Ascending aorta (tissue), 2 donors: ENCODE measurements at regions of chr10 and their contacts with region 1.

Region 1: DNA sequence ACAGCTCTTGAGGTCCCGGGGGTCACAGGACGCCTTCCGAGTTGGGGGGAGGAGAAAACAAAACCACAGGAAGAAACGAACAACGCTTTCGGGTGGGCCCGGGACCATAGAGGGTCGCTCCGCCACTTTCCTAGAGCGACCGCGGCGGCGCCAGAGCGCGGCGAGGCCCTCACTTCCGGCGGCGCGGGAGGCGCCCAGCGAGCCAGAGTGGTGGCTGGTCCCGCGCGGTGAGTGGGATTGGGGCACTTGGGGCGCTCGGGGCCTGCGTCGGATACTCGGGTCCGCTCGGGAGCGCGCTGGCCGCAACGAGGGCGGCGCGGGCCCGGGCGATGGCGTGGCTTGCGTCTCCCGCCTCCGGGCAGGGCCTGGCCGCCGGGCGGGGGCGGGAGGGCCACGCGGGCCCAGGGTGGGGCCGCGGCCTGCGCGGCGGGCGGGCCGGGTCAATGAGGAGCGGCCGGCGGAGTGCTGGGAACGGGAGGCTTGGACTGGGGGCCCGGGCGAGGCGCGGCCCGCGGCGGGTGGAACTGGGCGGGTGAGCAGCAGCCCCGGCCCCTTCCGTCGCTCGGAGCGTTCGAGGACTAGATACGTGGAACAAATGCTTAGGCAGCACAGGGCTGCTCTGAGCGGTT is at the start of gene ZNF22:
- DNase-seq: no peak
- H3K4me3 ChIP-seq: peak within 1 kb of the TSS; percentile 74
- H3K27ac ChIP-seq: peak within 1 kb of the TSS; percentile 90 to 93
- H3K4me1 ChIP-seq: peaks cover 3 to 44% of the 10 kb centered on the region in 2 donors
- H3K27me3 ChIP-seq: no peaks in the 10 kb centered on the region
- CTCF ChIP-seq: peak in 1 of 3 experiments; percentile 30
- total RNA-seq, gene ZNF22: 1.6 TPM

Region 2: DNA sequence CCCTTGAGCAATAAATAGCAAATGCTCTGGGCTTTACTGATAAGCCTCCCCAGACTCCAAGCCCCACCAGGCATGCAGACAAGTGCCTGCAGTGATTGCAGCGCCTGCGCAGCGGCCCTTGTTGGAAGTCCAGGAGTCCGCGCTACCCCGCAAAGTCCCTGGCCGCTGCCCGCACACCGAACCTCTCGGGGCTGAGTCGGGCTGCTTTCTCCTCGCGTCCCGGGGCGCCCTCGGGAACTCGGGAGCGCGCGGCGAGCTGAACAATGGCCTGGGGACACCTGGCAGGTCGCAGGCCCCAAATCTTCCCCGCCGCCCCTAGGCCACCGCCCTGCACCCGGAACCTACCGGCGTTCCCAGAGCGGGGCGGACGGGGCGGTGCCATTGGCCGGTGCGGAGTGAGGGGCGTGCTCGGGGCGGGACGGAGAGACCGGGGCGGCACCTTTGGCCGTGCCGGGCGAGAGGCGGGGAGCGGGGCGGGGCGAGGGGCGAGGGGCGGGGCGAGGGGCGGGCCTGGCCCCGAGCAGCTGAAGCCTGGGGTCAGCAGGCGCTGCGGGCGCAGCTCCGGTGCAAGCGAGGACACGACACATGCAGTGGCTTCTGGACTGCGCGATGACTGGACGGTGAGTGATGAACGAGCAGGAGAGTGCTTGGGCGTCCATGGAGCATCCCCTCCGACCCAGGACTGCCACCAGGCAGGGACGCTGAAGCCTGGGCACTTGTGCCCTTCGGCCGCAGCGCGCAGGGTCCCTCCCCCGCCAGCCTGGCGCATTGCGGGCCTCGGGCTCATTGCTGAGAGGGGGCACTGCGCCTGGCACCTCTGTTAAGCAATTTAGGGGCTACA is 41.4 kb before region 1 on chr10 and contains the start of gene RASSF4:
- intact Hi-C with region 1: loop called (anchors 1 kb)
- DNase-seq: peak in 1 of 2 donors; percentile 95
- H3K4me3 ChIP-seq: peak within 1 kb of the TSS; percentile 78 to 93
- H3K27ac ChIP-seq: peak within 1 kb of the TSS; percentile 86 to 90
- H3K4me1 ChIP-seq: peaks cover 13 to 40% of the 10 kb centered on the region in 2 donors
- H3K27me3 ChIP-seq: no peaks in the 10 kb centered on the region
- CTCF ChIP-seq: peak in 1 of 3 experiments; percentile 15
- total RNA-seq, gene RASSF4: 40.0 TPM

Region 3: DNA sequence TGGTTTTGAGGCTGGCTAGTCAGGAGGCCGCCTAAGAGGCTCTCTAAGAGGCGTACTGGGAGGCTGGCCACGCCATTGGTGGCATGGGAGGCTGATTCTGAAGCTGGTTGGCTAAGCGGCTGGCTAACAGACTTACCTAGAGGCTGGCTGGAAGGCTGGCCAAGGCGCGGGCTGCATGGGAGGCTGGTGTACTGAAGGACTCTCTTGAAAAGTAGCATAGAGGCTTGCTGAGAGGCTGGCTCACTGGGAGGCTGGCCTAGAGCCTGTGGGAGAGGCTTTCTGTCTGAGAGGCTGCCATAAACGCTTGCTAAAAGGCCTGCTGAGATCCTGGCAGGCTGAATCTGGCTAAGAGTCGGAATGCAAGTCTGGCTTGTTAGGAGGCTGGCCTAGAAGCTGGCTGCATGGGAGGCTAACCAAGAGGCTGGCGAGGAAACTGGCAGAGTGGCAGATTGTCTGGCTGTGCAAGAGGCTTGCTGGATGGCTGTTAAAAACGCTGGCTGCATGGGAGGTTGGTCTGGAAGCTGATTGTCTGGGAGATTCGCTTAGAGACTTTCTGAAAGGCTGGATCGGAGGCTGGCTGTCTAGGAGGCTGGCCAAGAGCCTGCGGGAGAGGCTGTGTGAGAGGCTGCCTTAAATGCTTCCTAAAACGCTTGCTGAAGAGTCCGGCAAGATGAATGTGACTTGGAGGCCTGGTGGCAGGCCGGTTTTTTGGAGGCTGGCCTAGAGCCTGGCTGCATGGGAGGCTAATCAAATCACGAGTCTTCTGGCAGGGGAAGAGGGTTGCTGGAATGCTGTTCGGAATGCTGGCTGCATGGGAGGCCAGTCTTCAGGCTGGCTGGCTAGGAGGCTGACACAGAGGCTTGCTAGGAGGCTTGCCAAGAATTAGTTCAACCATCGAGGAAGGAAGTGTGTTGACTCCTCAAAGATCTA is 180.3 kb after region 1 on chr10:
- intact Hi-C with region 1: loop called (anchors 2 kb)
- DNase-seq: peak in 1 of 2 donors; percentile 72
- H3K4me3 ChIP-seq: peak overlapping the region in 1 of 2 donors; percentile 9
- H3K27ac ChIP-seq: peak overlapping the region; percentile 70
- H3K4me1 ChIP-seq: peaks cover 0 to 13% of the 10 kb centered on the region in 2 donors
- H3K27me3 ChIP-seq: no peaks in the 10 kb centered on the region
- CTCF ChIP-seq: no peak

Region 4: DNA sequence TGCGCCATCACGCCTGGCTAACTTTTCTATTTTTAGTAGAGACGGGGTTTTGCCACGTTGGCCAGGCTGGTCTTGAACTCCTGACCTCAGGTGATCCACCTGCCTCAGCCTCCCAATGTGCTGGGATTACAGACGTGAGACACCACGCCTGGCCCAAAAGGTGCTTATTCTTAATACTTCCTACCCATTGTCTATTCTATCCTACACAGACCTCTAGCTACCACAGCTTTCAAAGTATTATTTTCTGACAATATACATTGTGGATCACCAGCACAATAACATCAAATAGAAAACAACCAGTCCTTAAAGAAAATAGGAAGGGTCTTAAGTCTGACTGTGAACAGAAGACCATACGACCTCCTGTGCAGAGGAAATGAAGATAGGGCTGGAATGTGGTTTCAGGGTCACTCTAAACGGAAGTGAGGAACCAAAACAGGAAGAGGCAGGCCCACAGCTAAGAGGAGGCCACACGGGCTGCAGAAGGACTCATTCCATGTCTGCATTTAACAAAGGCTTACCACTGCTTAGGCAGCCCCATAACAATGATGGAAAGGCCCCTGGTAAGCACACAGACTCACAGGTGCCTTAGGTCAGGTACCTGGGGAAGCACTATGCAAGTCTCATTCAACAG is 556.5 kb after region 1 on chr10:
- intact Hi-C with region 1: no loop called
- DNase-seq: no peak
- H3K4me3 ChIP-seq: no peak overlapping the region
- H3K27ac ChIP-seq: no peak overlapping the region
- H3K4me1 ChIP-seq: no peaks in the 10 kb centered on the region
- H3K27me3 ChIP-seq: no peaks in the 10 kb centered on the region
- CTCF ChIP-seq: no peak

Region 5: GRCh38 chr10:46022978-46023702 is 1022.3 kb after region 1 on chr10:
- intact Hi-C with region 1: loop called (anchors 5 kb)
- DNase-seq: peak; percentile 71 to 95
- H3K4me3 ChIP-seq: peak overlapping the region; percentile 63 to 67
- H3K27ac ChIP-seq: peak overlapping the region; percentile 80 to 82
- H3K4me1 ChIP-seq: peaks cover 3 to 27% of the 10 kb centered on the region in 2 donors
- H3K27me3 ChIP-seq: no peaks in the 10 kb centered on the region
- CTCF ChIP-seq: peak in 2 of 3 experiments; percentile 36 to 40